GM12878 (cell line): ENCODE measurements at regions of chr2 and their contacts with region 1.

Region 1: DNA sequence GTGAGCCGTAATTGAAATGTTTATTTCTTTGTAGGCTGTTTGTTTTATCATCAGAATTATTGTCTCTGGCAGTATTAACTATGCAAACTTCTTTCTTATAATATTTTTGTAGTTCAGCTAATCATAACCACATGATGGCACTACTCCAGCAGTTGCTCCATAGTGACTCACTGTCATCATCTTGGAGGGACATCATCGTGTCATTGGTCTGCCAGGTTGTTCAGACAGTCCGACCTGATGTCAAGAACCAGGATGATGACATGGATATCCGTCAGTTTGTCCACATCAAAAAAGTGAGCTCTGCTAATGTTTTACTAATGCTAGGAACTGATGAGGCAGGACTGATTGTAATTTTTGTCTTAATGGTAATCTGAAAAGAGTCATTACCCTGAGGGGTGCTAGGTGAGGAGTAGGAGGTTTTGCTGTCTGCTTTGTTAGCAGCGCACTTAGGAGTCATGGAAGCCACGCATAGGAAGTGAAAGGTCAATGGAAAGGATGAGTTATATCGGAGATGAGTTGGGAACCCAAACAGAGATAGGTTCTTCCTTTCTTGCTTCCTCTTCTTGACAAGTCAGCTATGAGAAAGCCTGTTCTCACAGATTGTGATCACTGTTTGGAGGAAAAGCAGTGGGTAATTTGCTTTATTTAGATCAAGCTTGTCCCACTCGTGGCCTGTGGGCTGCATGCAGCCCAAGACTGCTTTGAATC is 49.2 kb downstream of the PIKFYVE start:
- DNase-seq: peak; percentile 73
- ATAC-seq: peak; percentile 56
- H3K4me3 ChIP-seq: peak overlapping the region; percentile 25; the same call in 1 of the 2 replicates
- H3K27ac ChIP-seq: peak overlapping the region; percentile 17
- H3K4me1 ChIP-seq: peaks cover 27% of the 10 kb centered on the region
- H3K27me3 ChIP-seq: no peaks in the 10 kb centered on the region
- CTCF ChIP-seq: peak; percentile 8 to 24 (median 24); a peak in 3 of 6 replicates
- EP300 ChIP-seq: peak; percentile 20 to 40; a peak in 2 of 4 replicates
- POLR2A ChIP-seq: no peak
- RAD21 ChIP-seq: 0 out of 2 replicates have a peak, but pooled peaks have one; percentile 17

Region 2: DNA sequence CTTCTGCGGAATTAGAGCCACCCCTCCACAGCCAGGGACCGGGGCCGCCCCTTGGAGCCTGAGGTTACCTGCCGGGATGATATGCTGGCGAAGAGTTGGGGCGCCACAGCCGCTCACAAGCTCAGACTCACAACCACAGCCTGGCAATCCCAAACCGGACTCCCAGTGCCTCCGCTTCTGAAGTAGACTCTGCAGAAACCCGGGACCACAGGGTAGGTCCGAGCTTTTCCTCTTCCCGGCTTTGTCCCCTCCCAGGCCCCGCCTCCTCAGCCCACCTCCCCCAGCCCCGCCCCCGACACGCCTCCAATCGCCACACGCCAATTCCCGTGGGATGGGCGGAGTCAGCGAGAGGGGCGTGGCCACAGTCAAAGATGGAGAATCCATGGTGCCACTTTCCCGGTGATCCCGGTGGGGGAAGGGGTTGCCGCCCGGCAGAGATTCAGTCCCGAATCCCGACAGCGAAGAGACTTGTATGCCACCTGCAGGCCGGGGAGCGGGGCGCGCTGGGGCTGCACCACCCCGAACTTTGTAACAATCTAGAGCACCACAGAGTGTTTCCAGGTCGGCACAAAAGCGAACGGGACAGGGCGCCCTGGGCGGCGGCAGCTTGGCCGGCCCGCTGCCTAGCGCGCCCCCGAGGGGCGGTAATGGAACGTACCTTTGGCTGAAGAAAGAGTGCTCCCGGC is 60.2 kb before region 1 on chr2 and contains the start of gene IDH1:
- CTCF ChIA-PET with region 1: interaction called, 36 read pairs
- POLR2A ChIA-PET with region 1: interaction called, 8 read pairs
- RAD21 ChIA-PET with region 1: interaction called, 35 read pairs
- SMC1A ChIA-PET with region 1: interaction called, 25 read pairs
- in situ Hi-C with region 1: no loop called
- intact Hi-C with region 1: loop called (anchors 1 kb)
- DNase-seq: peak; percentile 60
- ATAC-seq: peak; percentile 80
- H3K4me3 ChIP-seq: peak within 1 kb of the TSS; percentile 98
- H3K27ac ChIP-seq: peak within 1 kb of the TSS; percentile 35
- H3K4me1 ChIP-seq: no peaks in the 10 kb centered on the region; the same call in 1 of the 2 replicates
- H3K27me3 ChIP-seq: no peaks in the 10 kb centered on the region
- CTCF ChIP-seq: peak; percentile 37 to 52 (median 44); a peak in 5 of 6 replicates
- EP300 ChIP-seq: no peak
- POLR2A ChIP-seq: peak; percentile 52; the same call in 1 of the 2 replicates
- RAD21 ChIP-seq: no peak
- polyA plus RNA-seq, gene IDH1: 56.0 to 67.7 TPM

Region 3: DNA sequence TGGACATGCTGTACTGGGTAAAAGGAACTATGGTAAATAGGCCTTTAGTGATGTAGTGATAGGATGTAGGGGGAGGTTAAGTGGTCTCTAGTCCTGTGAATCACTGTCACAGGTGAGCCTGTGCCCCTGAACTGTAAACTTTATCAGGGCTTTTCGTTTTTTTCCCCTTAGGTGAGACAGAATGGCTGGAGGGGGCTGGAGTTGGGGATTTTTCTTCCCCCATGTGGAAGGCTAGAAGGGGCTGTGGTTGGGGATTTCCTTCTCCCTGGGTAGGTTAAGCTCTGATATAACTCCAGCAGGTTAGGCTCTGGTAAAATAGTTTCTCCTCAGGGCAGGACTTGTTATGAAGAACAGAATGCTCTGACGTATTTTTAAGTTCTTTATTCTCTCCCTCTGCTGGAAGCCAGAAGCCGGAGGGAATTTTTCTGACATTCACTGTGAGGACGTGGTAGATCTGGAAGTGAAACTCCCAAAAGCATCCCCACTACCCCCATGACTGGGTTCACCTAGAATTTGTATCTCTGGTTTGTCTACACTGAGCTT is 20.7 kb before region 1 on chr2:
- CTCF ChIA-PET with region 1: interaction called, 17 read pairs
- POLR2A ChIA-PET with region 1: interaction called, 5 read pairs
- RAD21 ChIA-PET with region 1: interaction called, 8 read pairs
- SMC1A ChIA-PET with region 1: interaction called, 6 read pairs
- in situ Hi-C with region 1: no loop called
- intact Hi-C with region 1: loop called (anchors 2 kb)
- DNase-seq: no peak
- ATAC-seq: peak; percentile 87
- H3K4me3 ChIP-seq: peak overlapping the region; percentile 27; the same call in 1 of the 2 replicates
- H3K27ac ChIP-seq: peak overlapping the region; percentile 75
- H3K4me1 ChIP-seq: peaks cover 15% of the 10 kb centered on the region; the same call in 1 of the 2 replicates
- H3K27me3 ChIP-seq: no peaks in the 10 kb centered on the region
- CTCF ChIP-seq: no peak
- EP300 ChIP-seq: 0 out of 4 replicates have a peak, but pooled peaks of 1 of the 2 experiments have one; percentile 18
- POLR2A ChIP-seq: no peak
- RAD21 ChIP-seq: no peak

Region 4: DNA sequence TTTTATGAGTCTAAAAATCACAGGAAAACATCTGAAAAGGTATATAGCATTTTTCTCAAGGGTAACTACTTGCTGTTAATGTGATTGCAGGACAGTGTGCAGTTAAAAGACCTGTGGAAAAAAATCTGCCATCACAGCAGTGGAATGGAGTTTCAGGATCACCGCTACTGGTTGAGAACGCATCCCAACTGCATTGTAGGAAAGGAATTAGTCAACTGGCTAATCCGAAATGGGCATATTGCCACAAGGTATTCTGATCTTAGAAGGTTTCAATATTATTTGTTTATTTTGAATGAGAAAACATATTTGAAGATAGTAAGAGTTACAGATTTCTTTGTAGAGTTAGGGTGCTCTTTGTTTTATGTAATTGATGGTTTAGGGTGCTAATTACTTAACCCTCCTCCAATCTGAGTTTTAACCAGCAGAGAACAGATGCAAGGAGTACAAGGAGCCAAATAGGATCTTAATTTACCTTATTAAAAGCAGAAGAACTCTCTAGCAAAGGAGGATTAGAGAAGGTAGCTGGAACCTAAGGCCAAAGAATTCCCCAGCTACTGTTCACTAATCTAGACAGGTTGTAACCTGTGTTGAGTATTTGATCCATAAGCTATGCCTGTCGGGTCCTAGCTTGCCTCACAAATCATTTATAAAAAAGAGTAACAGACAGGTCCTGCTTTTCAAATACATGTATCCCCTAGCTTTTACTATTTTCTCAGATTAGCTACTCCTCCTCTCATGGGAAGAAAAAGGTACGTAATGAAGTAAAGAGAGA is 14.2 kb before region 1 on chr2:
- CTCF ChIA-PET with region 1: interaction called, 17 read pairs
- POLR2A ChIA-PET with region 1: interaction called, 4 read pairs
- RAD21 ChIA-PET with region 1: interaction called, 3 read pairs
- SMC1A ChIA-PET with region 1: interaction called, 26 read pairs
- in situ Hi-C with region 1: no loop called
- intact Hi-C with region 1: no loop called
- DNase-seq: no peak
- ATAC-seq: no peak
- H3K4me3 ChIP-seq: no peak overlapping the region
- H3K27ac ChIP-seq: no peak overlapping the region
- H3K4me1 ChIP-seq: no peaks in the 10 kb centered on the region
- H3K27me3 ChIP-seq: no peaks in the 10 kb centered on the region
- CTCF ChIP-seq: no peak
- EP300 ChIP-seq: no peak
- POLR2A ChIP-seq: no peak
- RAD21 ChIP-seq: no peak